ENCODE measurements at regions of chr7 and their contacts with region 1.

Region 1: DNA sequence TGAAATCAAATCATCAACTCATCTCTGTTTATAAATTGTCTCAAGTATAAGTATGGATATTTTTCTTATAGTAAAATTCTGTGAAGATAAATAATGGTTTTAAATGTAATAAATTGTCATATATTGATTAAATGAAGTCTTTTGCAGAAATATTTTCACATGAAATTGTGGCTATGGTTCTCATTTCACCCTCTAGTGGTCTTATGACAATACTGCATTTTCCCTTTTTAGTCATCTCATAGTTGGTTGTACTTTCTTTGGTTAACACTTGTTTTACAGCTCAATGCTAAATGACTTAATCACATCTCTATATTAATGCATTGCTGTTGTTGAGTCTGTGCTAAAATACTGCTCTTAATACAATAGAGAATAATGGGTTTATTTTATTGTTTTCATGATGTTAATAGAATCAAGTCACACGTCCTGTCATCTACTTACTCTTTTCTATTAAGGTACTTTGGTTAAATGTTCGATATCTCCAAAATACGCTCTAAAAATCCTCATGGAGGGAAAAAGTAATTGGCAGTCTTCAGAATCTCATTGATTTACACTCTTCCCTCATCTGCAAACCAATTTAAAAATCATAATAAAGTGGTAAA is 38.0 kb upstream of the CACNA2D1 start:
- DNase-seq: peak; percentile 50
- H3K4me3 ChIP-seq: no peak overlapping the region
- H3K27ac ChIP-seq: no peak overlapping the region
- H3K4me1 ChIP-seq: peaks cover 0 to 11% of the 10 kb centered on the region in 2 experiments; a peak in 2 of 4 replicates
- H3K27me3 ChIP-seq: no peaks in the 10 kb centered on the region
- CTCF ChIP-seq: peak; percentile 98
- EP300 ChIP-seq: no peak
- RAD21 ChIP-seq: peak; percentile 88

Region 2: DNA sequence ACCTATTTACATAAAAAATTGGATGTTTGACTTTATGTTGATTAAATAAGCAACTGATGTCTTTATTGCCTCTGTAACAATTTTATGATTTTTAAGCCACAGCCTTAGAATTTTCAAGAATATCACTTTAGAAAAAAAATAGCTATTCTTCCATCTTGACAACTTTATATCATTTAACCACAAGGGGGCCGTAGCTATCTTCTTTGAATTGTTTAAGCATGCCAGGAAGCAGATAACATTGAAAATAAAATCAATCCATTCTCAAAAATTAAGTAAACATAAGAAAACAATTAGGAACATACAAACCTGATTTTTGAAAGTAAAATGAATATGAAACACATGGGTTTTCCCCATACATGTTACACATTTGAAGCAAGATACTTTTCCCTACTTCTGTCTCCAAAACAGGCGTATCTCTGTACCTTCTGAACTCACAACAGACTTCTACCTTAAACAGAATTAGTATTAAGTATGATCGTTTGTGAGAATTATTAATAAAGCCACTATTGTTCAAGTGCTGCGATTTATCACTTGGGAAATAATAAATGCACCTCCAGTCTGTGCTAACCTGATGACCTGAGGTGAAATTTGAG is 247.0 kb before region 1 on chr7:
- CTCF ChIA-PET with region 1: interaction called, 16 read pairs
- POLR2A ChIA-PET with region 1: no interaction called
- DNase-seq: peak; percentile 22
- H3K4me3 ChIP-seq: no peak overlapping the region
- H3K27ac ChIP-seq: peak overlapping the region in 1 of 2 experiments; percentile 69; a peak in 2 of 4 replicates
- H3K4me1 ChIP-seq: peaks cover 13 to 30% of the 10 kb centered on the region in 2 experiments; a peak in 3 of 4 replicates
- H3K27me3 ChIP-seq: no peaks in the 10 kb centered on the region
- CTCF ChIP-seq: peak; percentile 97
- EP300 ChIP-seq: peak in 1 of 2 experiments; percentile 9; a peak in 1 of 4 replicates
- RAD21 ChIP-seq: peak; percentile 91

Region 3: DNA sequence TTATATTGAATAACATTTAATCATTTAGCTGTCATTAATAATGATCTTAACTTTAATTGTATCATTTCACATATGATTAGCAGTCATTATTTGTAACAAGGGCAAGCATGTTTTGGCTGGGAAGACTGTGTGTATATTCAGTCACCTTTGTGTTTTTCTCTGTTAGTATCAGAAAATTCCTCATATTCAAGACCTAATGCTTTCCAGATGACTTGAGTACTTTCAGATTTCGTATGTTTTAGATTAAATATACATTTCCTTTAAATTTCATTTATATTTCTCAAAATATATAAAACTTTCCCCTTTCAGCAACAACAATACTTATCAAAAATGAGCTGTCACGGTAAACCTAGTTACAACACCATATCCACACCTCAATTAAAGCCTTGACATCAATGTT is 31.7 kb before region 1 on chr7:
- CTCF ChIA-PET with region 1: interaction called, 16 read pairs
- POLR2A ChIA-PET with region 1: no interaction called
- DNase-seq: no peak
- H3K4me3 ChIP-seq: no peak overlapping the region
- H3K27ac ChIP-seq: peak overlapping the region in 1 of 2 experiments; percentile 51; a peak in 2 of 4 replicates
- H3K4me1 ChIP-seq: peaks cover 0 to 14% of the 10 kb centered on the region in 2 experiments; a peak in 2 of 4 replicates
- H3K27me3 ChIP-seq: no peaks in the 10 kb centered on the region
- CTCF ChIP-seq: no peak
- EP300 ChIP-seq: peak in 1 of 2 experiments; percentile 26; a peak in 1 of 4 replicates
- RAD21 ChIP-seq: no peak

Region 4: DNA sequence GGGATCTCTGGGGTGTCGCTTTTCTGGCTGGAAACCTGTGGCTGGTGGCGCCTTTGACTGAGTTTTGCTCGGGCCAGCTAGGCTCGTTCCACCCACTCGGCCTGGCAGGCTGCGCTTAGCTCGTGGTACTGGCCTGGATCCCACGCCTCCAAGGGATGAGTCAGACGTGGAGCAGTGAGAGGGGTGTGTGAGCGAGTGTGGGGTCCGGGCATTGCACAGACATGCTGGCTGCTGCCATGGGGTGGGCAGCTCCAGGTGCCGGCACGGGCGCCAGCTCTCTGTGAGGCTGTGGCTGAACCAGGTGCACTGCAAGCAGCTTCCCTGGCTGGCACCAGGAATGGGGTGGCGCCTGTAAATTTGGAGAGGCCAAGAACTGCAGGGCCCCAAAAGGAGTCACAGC is 25.1 kb after region 1 on chr7:
- CTCF ChIA-PET with region 1: interaction called, 13 read pairs
- POLR2A ChIA-PET with region 1: no interaction called
- DNase-seq: no peak
- H3K4me3 ChIP-seq: no peak overlapping the region
- H3K27ac ChIP-seq: no peak overlapping the region
- H3K4me1 ChIP-seq: no peaks in the 10 kb centered on the region
- H3K27me3 ChIP-seq: no peaks in the 10 kb centered on the region
- CTCF ChIP-seq: no peak
- EP300 ChIP-seq: no peak
- RAD21 ChIP-seq: no peak

Region 5: GRCh38 chr7:82534683-82535082 is 53.1 kb after region 1 on chr7:
- CTCF ChIA-PET with region 1: no interaction called
- POLR2A ChIA-PET with region 1: no interaction called
- DNase-seq: no peak
- H3K4me3 ChIP-seq: no peak overlapping the region
- H3K27ac ChIP-seq: no peak overlapping the region
- H3K4me1 ChIP-seq: no peaks in the 10 kb centered on the region; a peak in 2 of 4 replicates
- H3K27me3 ChIP-seq: no peaks in the 10 kb centered on the region
- CTCF ChIP-seq: no peak
- EP300 ChIP-seq: no peak
- RAD21 ChIP-seq: no peak

Region 6: DNA sequence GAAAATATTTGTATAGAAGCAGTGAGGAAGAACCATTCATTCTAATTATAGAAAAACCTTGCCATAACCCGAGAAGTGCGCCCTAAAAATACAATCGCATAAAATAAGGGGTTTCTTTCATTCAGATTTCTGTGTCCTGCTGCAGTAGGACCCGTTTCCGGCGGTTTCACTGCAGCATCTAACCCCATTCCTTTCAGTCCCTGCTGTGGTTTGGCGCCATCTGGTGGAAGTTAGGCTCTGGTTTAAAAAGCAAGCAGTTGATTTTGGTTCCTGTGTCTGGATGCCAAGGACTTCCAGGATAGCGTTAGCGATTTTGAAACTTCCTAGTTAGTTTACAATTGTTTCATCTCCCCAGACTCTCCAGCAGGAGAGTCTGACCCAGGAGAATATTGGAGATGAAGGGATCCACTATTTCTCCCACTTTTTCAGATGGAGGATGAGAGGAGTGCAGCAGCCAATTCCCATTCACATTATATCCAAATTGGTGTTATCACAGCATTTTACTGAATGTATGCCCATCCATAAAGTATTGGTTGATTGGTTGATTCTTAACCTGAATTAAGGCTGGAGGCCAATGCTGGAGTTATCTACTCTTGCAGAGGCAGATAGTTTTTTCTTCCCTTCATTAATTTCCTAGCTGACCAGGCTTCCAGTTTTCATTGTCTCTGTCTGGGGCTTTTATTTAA is 90.7 kb after region 1 on chr7:
- CTCF ChIA-PET with region 1: interaction called, 19 read pairs
- POLR2A ChIA-PET with region 1: no interaction called
- DNase-seq: peak; percentile 89
- H3K4me3 ChIP-seq: peak overlapping the region; percentile 18 to 27; a peak in 2 of 4 replicates
- H3K27ac ChIP-seq: peak overlapping the region in 1 of 2 experiments; percentile 25; a peak in 1 of 4 replicates
- H3K4me1 ChIP-seq: peaks cover 4 to 11% of the 10 kb centered on the region in 2 experiments; a peak in 2 of 4 replicates
- H3K27me3 ChIP-seq: no peaks in the 10 kb centered on the region
- CTCF ChIP-seq: peak; percentile 100
- EP300 ChIP-seq: peak in 1 of 2 experiments; percentile 52; a peak in 2 of 4 replicates
- RAD21 ChIP-seq: peak; percentile 100